Right cardiac atrium (tissue), 5 donors: ENCODE measurements at regions of chr7 and their contacts with region 1.

Region 1: GRCh38 chr7:2719007-2719406 is 31.0 kb downstream of the AMZ1 start:
- DNase-seq: peak in 1 of 3 donors; percentile 64
- ATAC-seq: no peak
- H3K4me3 ChIP-seq: no peak overlapping the region
- H3K27ac ChIP-seq: no peak overlapping the region
- H3K4me1 ChIP-seq: peaks cover 5% of the 10 kb centered on the region
- H3K27me3 ChIP-seq: no peaks in the 10 kb centered on the region

Region 2: DNA sequence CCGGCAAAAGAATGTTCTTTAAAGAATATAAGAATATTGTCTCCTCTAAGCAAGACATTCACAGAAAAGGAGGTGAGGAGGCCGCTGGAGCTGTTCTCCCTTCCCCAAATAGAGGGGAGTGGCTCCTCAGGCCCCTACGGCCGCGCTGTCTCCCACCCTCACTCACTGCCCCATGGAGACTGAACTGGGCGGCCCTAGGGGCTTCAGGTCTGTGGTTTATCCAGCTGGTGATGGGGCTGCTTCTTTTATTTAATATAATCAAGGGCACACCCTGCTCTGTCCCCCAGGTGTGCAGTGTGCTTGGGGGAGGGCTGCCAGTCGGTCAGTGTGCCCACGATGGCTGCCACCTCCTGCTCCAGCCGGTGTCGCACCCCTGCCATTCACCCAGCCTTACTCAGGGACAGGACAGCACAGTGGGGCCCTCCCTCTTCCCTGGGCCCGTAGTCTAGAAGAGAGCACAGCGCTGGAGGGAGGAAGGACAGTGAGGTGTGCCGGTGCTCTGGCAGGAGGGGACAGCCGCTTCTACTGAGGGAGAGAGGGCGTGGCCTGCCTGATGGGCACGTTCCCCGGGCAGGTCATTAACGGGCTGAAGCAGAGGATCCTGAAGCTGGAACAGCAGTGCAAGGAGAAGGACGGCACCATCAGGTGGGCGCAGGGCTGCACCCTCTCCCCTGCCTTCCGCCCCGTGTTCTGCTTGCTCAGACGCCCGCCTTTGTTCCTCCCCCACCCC is 136.8 kb before region 1 on chr7:
- intact Hi-C with region 1: no loop called
- DNase-seq: no peak
- ATAC-seq: peak; percentile 27 to 39
- H3K4me3 ChIP-seq: no peak overlapping the region
- H3K27ac ChIP-seq: no peak overlapping the region
- H3K4me1 ChIP-seq: no peaks in the 10 kb centered on the region
- H3K27me3 ChIP-seq: no peaks in the 10 kb centered on the region

Region 3: DNA sequence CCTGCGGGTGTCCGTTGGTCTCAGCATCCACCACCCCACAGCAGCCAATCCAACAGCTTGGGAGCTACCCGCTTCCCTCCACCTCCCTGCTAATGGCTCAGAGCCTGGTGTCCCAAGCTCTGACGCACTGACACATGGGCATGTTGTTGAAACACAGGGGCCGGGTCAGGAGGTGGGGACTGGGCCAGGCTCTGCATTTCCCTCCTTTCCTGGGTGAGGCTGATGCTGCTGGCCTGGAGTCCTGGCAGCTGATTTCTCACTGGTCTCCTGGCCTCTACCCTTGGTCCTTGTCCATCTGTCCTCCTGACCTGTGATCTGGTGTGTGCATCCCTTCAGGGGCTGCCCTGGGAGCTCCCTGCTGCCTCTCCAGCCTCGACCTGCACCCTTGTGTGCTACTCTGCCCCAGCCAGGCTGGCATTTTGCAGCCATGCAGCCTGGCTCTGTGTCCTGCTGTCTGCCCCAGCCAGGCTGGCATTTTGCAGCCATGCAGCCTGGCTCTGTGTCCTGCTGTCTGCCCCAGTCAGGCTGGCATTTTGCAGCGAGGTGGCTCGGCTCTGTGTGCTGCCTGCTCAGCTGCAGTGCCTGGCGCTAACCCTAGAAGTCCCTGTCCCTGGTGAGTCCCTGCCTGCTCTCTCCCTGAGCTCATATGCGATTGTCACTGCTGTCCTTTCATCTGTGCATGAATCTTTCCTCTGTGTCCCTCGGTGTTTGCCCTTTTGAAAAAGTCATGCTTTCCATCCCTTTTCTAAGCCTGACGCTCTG is 17.0 kb before region 1 on chr7:
- intact Hi-C with region 1: loop called in 1 of 4 experiments (anchors 2 kb)
- DNase-seq: peak; percentile 81 to 88 (median 83)
- ATAC-seq: peak; percentile 77 to 84
- H3K4me3 ChIP-seq: no peak overlapping the region
- H3K27ac ChIP-seq: no peak overlapping the region
- H3K4me1 ChIP-seq: no peaks in the 10 kb centered on the region
- H3K27me3 ChIP-seq: no peaks in the 10 kb centered on the region

Region 4: DNA sequence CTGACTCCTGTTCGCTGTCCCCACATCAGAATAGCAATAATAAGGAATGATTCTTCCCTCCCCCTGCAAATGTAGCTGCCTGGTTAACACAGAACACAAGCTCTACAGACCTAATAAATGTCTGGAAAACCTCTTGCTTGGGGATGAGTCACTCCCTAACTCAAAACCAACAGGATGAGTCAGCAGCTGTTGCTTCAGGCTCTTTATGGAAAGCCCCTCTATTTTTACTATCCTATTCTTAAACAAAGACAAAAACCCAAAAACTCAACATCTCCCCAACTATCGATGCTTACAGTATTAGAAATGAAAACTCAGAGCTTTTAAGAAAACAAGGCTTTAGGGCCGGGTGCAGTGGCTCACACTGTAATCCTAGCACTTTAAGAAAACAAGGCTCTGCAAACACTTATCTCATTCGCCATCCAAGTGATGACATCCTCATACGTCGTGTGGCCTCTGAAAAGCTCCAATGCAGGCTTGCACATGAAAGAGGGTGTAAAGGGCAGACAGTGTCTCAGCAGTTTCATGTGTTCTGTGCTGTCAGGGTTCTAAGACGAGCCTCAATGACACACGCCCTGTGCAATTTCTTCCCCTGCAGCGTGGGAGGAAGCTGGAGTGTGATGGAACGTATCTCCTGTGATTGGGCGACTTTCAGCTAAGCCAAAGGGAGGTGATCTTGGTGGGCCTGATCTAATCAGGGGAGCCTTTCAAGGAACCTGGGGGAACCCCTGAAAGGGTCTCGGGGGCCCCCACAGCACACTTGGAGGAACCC is 39.1 kb after region 1 on chr7:
- intact Hi-C with region 1: no loop called
- DNase-seq: peak in 2 of 3 donors; percentile 50 to 59
- ATAC-seq: peak; percentile 31 to 63
- H3K4me3 ChIP-seq: no peak overlapping the region
- H3K27ac ChIP-seq: peak overlapping the region; percentile 37
- H3K4me1 ChIP-seq: peaks cover 19% of the 10 kb centered on the region
- H3K27me3 ChIP-seq: no peaks in the 10 kb centered on the region